GM12878 (cell line): ENCODE measurements at regions of chr3 and their contacts with region 1.

Region 1: GRCh38 chr3:73056014-73056844 is 5.2 kb upstream of the EBLN2 start:
- DNase-seq: no peak
- ATAC-seq: peak; percentile 49
- H3K4me3 ChIP-seq: no peak overlapping the region
- H3K27ac ChIP-seq: no peak overlapping the region
- H3K4me1 ChIP-seq: no peaks in the 10 kb centered on the region
- H3K27me3 ChIP-seq: no peaks in the 10 kb centered on the region
- CTCF ChIP-seq: peak; percentile 34 to 57 (median 35); a peak in 3 of 6 replicates
- EP300 ChIP-seq: no peak
- POLR2A ChIP-seq: no peak
- RAD21 ChIP-seq: peak; percentile 75

Region 2: DNA sequence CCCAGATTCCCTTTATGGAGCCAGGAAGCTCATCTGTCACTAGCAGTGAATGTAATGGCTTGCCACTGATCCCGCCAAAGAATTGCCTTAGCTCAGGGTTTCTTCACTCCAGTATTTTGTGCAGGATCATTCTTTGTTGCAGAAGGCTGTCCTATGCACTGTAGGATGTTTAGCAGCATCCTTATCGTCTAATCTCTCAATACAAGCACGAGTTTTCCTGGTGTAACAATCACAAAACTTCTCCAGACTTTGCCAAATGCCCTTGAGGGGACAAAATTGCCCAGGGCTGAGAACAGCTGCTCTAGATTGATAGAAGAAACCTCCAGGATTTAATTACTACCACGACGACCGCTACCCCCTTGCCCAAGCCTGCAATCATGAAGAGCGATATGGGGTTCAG is 201.2 kb before region 1 on chr3:
- CTCF ChIA-PET with region 1: interaction called, 38 read pairs
- POLR2A ChIA-PET with region 1: no interaction called
- RAD21 ChIA-PET with region 1: interaction called, 21 read pairs
- SMC1A ChIA-PET with region 1: interaction called, 36 read pairs
- in situ Hi-C with region 1: loop called (anchors 10 kb)
- intact Hi-C with region 1: loop called (anchors 2 kb)
- DNase-seq: no peak
- ATAC-seq: no peak
- H3K4me3 ChIP-seq: no peak overlapping the region
- H3K27ac ChIP-seq: no peak overlapping the region
- H3K4me1 ChIP-seq: peaks cover 16% of the 10 kb centered on the region
- H3K27me3 ChIP-seq: no peaks in the 10 kb centered on the region
- CTCF ChIP-seq: no peak
- EP300 ChIP-seq: no peak
- POLR2A ChIP-seq: no peak
- RAD21 ChIP-seq: no peak

Region 3: GRCh38 chr3:72951259-72951722 is 104.9 kb before region 1 on chr3:
- CTCF ChIA-PET with region 1: interaction called, 28 read pairs
- POLR2A ChIA-PET with region 1: interaction called, 6 read pairs
- RAD21 ChIA-PET with region 1: interaction called, 5 read pairs
- SMC1A ChIA-PET with region 1: interaction called, 9 read pairs
- in situ Hi-C with region 1: no loop called
- intact Hi-C with region 1: no loop called
- DNase-seq: peak; percentile 44
- ATAC-seq: peak; percentile 90
- H3K4me3 ChIP-seq: peak overlapping the region; percentile 1; the same call in 1 of the 2 replicates
- H3K27ac ChIP-seq: no peak overlapping the region
- H3K4me1 ChIP-seq: peaks cover 13% of the 10 kb centered on the region
- H3K27me3 ChIP-seq: no peaks in the 10 kb centered on the region
- CTCF ChIP-seq: no peak
- EP300 ChIP-seq: peak in 1 of 2 experiments; percentile 14; a peak in 1 of 4 replicates
- POLR2A ChIP-seq: no peak
- RAD21 ChIP-seq: no peak

Region 4: GRCh38 chr3:72996473-72997333 is 59.5 kb before region 1 on chr3 and contains the start of gene PPP4R2:
- CTCF ChIA-PET with region 1: interaction called, 88 read pairs
- POLR2A ChIA-PET with region 1: interaction called, 4 read pairs
- RAD21 ChIA-PET with region 1: interaction called, 48 read pairs
- SMC1A ChIA-PET with region 1: interaction called, 62 read pairs
- in situ Hi-C with region 1: no loop called
- intact Hi-C with region 1: loop called (anchors 2 kb)
- DNase-seq: peak; percentile 55
- ATAC-seq: peak; percentile 90
- H3K4me3 ChIP-seq: peak within 1 kb of the TSS; percentile 96
- H3K27ac ChIP-seq: peak within 1 kb of the TSS; percentile 90
- H3K4me1 ChIP-seq: peaks cover 4% of the 10 kb centered on the region
- H3K27me3 ChIP-seq: no peaks in the 10 kb centered on the region
- CTCF ChIP-seq: no peak
- EP300 ChIP-seq: no peak
- POLR2A ChIP-seq: peak; percentile 97
- RAD21 ChIP-seq: no peak
- polyA plus RNA-seq, gene PPP4R2: 16.7 to 22.1 TPM

Region 5: DNA sequence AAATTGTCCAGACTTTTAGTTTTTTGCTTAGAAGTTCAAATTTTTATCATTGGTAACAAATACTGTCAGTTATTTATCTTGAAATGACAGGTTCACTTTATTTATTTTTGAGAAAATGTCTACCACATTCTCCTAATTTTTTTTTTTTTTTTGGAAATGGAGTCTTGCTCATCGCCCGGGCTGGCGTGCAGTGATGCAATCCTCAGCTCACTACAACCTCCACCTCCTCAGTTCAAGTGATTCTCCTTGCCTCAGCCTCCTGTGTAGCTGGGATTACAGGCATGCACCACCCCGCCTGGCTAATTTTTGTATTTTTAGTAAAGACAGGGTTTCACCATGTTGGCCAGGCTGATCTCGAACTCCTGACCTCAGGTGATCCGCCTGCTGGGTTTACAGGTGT is 10.8 kb before region 1 on chr3:
- CTCF ChIA-PET with region 1: interaction called, 19 read pairs
- POLR2A ChIA-PET with region 1: no interaction called
- RAD21 ChIA-PET with region 1: no interaction called
- SMC1A ChIA-PET with region 1: interaction called, 8 read pairs
- in situ Hi-C with region 1: no loop called
- intact Hi-C with region 1: no loop called
- DNase-seq: no peak
- ATAC-seq: no peak
- H3K4me3 ChIP-seq: no peak overlapping the region
- H3K27ac ChIP-seq: no peak overlapping the region
- H3K4me1 ChIP-seq: peaks cover 8% of the 10 kb centered on the region; the same call in 1 of the 2 replicates
- H3K27me3 ChIP-seq: no peaks in the 10 kb centered on the region
- CTCF ChIP-seq: no peak
- EP300 ChIP-seq: no peak
- POLR2A ChIP-seq: no peak
- RAD21 ChIP-seq: no peak

Region 6: DNA sequence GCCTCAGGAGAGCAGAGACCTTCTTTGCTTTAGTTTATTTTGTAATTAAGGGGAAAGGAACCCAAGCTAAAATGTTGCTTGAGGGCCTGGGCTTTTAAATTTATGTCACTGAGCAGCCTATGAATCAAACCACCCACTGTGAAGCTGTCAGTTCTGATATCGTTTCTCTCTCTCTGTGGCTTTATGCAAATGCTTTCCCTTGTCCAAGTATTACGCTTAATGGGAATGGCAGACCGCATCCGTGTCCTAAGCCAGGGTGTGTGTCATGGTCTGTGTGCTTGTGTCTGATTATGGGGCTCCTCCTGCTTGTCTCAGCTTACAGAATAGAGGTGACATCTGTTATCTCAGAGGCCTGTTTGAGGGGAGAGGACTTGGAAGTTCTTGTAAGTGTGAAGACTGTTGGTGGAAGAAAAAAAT is 87.6 kb after region 1 on chr3:
- CTCF ChIA-PET with region 1: no interaction called
- POLR2A ChIA-PET with region 1: no interaction called
- RAD21 ChIA-PET with region 1: no interaction called
- SMC1A ChIA-PET with region 1: no interaction called
- in situ Hi-C with region 1: no loop called
- intact Hi-C with region 1: no loop called
- DNase-seq: no peak
- ATAC-seq: no peak
- H3K4me3 ChIP-seq: no peak overlapping the region
- H3K27ac ChIP-seq: no peak overlapping the region
- H3K4me1 ChIP-seq: no peaks in the 10 kb centered on the region
- H3K27me3 ChIP-seq: no peaks in the 10 kb centered on the region; a peak in 1 of 4 replicates
- CTCF ChIP-seq: no peak
- EP300 ChIP-seq: no peak
- POLR2A ChIP-seq: no peak
- RAD21 ChIP-seq: no peak